Calu3 (cell line): ENCODE measurements at regions of chr19 and their contacts with region 1.

Region 1: GRCh38 chr19:32988724-32989123 is 16.7 kb downstream of the FAAP24 start:
- DNase-seq: no peak
- H3K4me3 Mint-ChIP-seq: no peak overlapping the region
- H3K27ac Mint-ChIP-seq: peak overlapping the region; percentile 4
- H3K4me1 Mint-ChIP-seq: no peaks in the 10 kb centered on the region
- H3K27me3 Mint-ChIP-seq: no peaks in the 10 kb centered on the region
- CTCF ChIP-seq: no peak

Region 2: DNA sequence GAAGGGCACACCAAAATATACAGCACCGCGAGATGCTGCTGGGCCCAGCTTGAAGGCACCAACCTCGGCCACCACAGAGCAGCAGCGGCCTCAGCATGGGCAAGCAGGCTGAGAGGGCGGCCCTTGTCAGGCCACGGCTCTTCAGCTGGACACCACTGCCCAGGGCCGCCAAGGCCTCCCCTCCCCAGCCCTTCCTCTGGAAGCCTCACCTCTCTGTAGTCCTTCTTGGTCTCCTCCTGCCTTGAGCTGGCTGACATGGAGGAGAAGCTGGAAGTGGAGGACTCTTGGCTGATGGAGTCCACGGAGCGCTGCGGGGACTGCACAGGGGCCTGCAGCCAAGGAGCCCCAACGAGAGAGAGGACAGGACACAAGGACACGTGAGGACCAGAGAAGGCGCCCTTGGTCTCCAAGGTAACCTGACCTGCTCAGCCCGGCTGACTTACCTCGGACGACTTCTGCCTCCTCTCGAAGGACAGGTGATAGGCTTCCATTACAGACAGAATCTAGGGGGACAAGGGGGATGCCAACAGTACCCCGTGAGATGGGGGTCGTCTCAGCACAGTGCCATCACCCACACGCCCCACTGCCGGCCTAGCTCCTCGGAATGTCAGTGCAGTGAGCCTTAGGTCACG is 369.6 kb before region 1 on chr19:
- CTCF ChIA-PET with region 1: interaction called, 11 read pairs
- intact Hi-C with region 1: no loop called
- DNase-seq: no peak
- H3K4me3 Mint-ChIP-seq: no peak overlapping the region
- H3K27ac Mint-ChIP-seq: no peak overlapping the region
- H3K4me1 Mint-ChIP-seq: no peaks in the 10 kb centered on the region
- H3K27me3 Mint-ChIP-seq: no peaks in the 10 kb centered on the region
- CTCF ChIP-seq: no peak

Region 3: DNA sequence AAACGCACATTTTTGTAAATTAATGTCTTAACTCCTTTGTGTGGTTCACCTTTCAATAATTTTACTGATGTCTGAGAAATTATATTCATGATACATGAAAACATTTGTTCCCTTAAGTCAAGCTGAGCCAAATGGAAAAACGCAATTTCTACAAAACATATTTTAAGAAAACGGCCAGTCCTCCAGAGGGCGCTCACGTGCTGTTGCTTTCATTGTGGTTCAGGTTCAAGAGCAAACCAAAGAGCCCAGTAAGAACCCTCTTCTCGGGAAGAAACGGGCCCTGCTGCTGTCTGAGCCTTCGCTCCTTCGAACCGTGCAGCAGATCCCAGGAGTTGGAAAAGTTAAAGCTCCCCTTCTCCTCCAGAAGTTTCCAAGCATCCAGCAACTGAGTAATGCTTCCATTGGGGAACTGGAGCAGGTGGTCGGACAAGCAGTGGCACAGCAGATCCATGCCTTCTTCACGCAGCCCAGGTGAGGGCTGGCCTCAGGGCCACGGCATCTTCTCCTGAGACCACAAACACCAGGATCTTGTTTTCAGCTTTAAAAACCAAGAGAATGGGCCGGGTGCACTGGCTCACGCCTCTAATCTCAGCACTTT is 12.4 kb before region 1 on chr19:
- CTCF ChIA-PET with region 1: no interaction called
- intact Hi-C with region 1: no loop called
- DNase-seq: peak; percentile 83
- H3K4me3 Mint-ChIP-seq: no peak overlapping the region
- H3K27ac Mint-ChIP-seq: peak overlapping the region; percentile 19
- H3K4me1 Mint-ChIP-seq: no peaks in the 10 kb centered on the region
- H3K27me3 Mint-ChIP-seq: no peaks in the 10 kb centered on the region
- CTCF ChIP-seq: peak; percentile 89